Activated naive CD4-positive, alpha-beta T cell treated with anti-CD3 and anti-CD28 coated beads for 36 hours (primary cell): ENCODE measurements at regions of chr14 and their contacts with region 1.

Region 1: DNA sequence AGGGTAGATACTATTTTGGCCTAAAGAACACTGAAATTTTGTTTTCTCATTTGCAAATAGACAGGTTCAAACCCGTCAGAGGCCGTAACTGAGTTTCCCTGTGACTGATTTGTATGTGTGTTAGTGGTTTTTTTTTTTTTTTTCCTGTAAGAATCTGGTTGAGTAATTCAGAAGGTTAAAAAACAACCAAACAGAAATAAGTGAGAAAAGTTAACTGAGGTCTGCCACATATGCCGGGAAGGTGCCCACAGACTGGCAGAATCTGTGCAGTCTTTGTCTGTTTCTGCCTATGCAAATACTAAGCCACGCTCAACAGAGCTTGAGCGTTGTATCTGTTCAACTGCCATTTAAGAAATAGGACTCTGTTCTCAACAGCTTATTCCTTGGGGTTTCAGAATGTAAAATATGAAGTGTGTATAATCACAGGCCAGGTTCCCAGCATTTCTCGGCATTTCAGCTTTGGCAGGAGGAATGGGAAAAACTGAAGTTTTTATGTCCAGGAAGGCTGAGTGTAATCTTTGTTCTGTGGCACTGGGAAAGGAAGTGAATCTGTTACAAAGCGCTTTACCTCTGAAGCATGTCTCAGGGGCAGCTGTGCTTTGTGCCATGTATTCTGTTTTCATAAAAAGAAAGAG is 181.9 kb downstream of the PRKCH start:
- DNase-seq: peak; percentile 92
- H3K4me3 Mint-ChIP-seq: peak overlapping the region; percentile 66
- H3K27ac Mint-ChIP-seq: peak overlapping the region; percentile 100
- H3K4me1 Mint-ChIP-seq: peaks cover 97% of the 10 kb centered on the region
- H3K27me3 Mint-ChIP-seq: no peaks in the 10 kb centered on the region

Region 2: DNA sequence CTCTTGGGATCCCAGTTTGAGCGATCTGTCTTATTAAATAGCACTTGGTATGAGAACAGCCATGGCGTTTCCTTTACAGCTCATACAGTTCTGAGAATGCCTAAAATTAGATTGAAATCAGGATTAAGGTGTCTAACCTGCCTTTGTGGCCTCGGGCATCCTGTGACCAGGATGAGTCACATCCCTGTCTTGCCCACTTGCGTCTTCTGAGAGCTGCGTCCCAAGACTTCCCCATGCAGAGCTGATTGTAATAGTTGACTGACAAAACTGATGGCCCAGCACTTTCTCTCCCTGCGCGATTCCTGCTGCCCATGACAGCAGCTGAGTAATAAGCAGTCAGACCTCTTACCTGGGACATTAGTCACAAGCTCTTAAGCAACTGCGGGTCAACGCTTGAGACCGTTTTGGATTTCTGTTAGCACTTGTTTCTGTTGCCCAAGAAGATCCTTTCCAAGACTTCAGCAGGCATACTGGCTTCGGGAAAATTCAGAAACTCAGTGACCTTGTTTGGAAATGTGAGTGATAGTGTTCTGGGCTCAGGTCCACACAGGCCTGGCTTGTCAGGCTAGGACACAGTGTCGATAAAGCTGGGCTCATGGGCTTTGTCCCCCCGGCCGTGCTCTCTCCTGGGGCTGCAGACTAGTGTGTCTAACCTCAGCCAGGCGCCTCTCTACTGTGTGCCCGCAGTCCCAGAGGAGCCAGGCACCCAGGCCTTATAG is 22.2 kb after region 1 on chr14:
- CTCF ChIA-PET with region 1: no interaction called
- intact Hi-C with region 1: loop called (anchors 1 kb)
- DNase-seq: peak; percentile 91
- H3K4me3 Mint-ChIP-seq: peak overlapping the region; percentile 22
- H3K27ac Mint-ChIP-seq: peak overlapping the region; percentile 94
- H3K4me1 Mint-ChIP-seq: peaks cover 84% of the 10 kb centered on the region
- H3K27me3 Mint-ChIP-seq: no peaks in the 10 kb centered on the region

Region 3: DNA sequence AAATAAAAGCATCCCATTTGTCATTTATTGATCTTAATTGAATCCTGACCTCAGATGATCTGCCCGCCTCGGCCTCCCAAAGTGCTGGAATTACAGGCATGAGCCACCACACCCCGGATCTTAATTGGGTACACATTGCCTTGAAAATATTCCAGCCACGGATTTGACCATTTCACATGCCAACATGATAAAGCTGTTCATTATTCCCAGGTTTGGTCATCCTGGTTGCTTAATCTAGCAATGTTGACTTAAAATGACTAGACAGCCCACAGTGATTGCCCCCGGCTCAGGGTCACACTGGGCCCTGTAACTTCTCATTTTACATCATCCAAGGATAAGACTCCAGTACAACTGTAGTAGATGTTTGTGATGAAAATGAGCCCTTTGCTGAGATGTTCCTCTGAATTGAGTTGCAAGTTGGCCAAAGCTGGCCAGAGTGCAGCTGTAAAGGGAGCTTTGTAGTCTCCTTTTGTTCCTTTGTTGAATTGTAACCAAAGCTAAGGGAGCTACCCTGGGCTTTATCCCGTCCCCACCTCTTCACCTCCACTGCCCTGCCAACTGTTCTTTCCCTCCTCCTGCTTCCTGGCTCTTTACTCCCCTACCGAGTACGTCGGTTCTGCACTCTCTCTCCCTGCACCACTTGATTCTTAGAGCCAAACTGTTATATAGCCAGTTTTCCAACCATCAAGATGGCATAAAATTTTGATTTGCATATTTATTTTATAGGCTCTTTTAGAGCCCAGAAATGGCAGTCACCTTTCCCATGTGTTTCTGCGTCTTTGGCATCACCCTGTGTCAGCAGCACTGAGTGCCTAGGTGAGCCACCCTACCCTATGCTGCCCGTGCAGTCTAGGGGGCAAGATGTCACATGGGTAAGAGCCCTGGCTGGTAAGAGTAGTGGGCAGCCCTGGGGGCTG is 50.7 kb after region 1 on chr14:
- CTCF ChIA-PET with region 1: interaction called, 3 read pairs
- intact Hi-C with region 1: loop called (anchors 1 kb)
- DNase-seq: no peak
- H3K4me3 Mint-ChIP-seq: no peak overlapping the region
- H3K27ac Mint-ChIP-seq: peak overlapping the region; percentile 97
- H3K4me1 Mint-ChIP-seq: peaks cover 66% of the 10 kb centered on the region
- H3K27me3 Mint-ChIP-seq: no peaks in the 10 kb centered on the region

Region 4: GRCh38 chr14:61620130-61620946 is 117.1 kb after region 1 on chr14:
- CTCF ChIA-PET with region 1: no interaction called
- intact Hi-C with region 1: loop called (anchors 1 kb)
- DNase-seq: peak; percentile 85
- H3K4me3 Mint-ChIP-seq: no peak overlapping the region
- H3K27ac Mint-ChIP-seq: peak overlapping the region; percentile 89
- H3K4me1 Mint-ChIP-seq: peaks cover 80% of the 10 kb centered on the region
- H3K27me3 Mint-ChIP-seq: no peaks in the 10 kb centered on the region